Activated CD8-positive, alpha-beta T cell treated with anti-CD3 and anti-CD28 coated beads for 36 hours (primary cell): ENCODE measurements at regions of chr3 and their contacts with region 1.

Region 1: DNA sequence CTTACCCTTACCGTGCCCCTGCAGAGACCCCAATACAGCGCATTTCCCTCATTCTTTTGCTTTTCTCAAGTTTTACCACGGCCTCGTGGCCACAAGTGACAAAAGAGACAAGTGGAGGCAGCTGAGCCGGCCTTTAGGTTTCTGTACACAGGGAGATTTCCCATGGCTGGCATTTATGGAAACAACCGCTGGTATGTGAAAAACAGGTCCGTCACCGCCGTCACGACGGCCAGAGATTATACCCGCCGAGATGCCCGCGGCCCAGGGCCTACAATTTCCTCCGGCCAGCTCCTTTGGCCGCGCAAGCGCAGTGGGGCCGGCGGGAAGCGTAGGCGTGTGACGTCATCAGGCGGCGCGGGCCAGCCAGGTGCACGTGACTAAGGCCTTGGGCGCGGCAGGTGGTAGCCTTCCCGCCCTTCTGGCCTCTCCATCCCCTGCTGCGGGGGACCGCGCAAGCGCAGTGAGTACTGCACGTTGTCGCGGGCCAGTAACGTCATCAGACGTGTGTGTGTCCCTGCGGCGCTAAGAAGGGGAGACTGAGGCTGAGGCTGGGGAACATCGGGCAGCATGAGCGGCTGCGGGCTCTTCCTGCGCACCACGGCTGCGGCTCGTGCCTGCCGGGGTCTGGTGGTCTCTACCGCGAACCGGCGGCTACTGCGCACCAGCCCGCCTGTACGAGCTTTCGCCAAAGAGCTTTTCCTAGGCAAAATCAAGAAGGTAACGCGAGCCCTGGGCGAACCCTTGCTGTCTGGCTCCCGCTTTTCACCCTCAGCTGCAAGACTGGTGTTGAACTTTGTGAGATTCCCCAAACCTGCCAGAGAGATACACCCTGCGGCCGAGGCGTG is at the start of gene ACAD9:
- DNase-seq: peak; percentile 96
- ATAC-seq: peak; percentile 91
- H3K4me3 Mint-ChIP-seq: peak within 1 kb of the TSS; percentile 92
- H3K27ac Mint-ChIP-seq: peak within 1 kb of the TSS; percentile 97
- H3K4me1 Mint-ChIP-seq: peaks cover 52% of the 10 kb centered on the region
- H3K27me3 Mint-ChIP-seq: no peaks in the 10 kb centered on the region
- CTCF ChIP-seq: no peak
- total RNA-seq, gene ACAD9: 50.1 to 50.5 TPM

Region 2: GRCh38 chr3:128617557-128618397 is 261.6 kb before region 1 on chr3:
- CTCF ChIA-PET with region 1: interaction called, 34 read pairs
- POLR2A ChIA-PET with region 1: interaction called, 8 read pairs
- intact Hi-C with region 1: no loop called
- DNase-seq: peak; percentile 99
- ATAC-seq: peak; percentile 90
- H3K4me3 Mint-ChIP-seq: peak overlapping the region; percentile 95
- H3K27ac Mint-ChIP-seq: peak overlapping the region; percentile 94
- H3K4me1 Mint-ChIP-seq: peaks cover 29% of the 10 kb centered on the region
- H3K27me3 Mint-ChIP-seq: no peaks in the 10 kb centered on the region
- CTCF ChIP-seq: peak; percentile 92

Region 3: DNA sequence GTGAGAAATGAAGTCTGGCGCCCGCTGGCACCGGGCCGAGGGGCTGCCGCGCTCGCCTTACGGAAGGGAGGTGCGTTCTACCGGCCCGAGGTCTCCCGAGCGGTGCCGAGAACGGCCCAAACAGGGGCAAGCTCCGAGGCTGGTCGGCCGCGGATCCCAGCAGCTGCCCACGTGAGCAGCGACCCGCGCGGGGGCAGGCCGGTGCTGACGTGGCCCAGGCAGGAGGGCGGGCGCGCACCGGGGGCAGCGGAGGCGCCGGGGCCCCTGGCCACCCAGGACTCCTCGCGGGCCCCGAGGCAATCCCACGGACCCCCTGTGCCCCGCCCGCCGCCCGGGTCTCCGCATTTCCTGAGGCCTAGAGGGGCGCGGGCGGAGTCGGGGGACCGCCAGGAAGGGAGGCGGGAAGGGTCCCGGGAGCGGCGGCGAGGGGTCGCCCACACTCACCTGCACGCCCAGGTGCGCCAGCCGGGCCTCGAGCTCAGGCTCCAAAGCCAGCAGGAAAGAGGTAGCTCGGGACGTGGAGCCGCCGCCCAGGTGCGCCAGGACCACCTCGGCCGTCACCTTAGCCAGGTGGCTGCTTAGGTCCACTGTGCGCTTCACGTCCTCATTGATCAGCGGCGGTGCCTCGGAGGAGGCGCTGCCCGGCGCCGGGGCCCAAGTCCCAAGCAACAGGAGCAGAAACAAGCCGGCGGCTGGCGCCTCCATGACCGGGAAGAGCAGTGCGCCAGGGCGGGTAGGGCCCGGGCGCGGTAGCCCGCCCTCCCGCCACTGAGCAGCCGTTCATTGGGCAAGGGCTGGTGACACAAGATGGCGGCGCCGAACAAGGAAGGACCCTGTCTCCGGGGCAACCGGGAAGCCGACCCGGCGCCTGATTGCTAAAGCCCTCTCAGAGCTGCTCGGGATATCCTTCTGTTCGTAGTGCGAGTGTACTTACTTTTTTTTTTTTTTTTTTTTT is 229.0 kb before region 1 on chr3 and contains the start of gene RPN1:
- CTCF ChIA-PET with region 1: interaction called, 4 read pairs
- POLR2A ChIA-PET with region 1: interaction called, 3 read pairs
- intact Hi-C with region 1: loop called (anchors 2 kb)
- DNase-seq: peak; percentile 97
- ATAC-seq: peak; percentile 97
- H3K4me3 Mint-ChIP-seq: peak within 1 kb of the TSS; percentile 87
- H3K27ac Mint-ChIP-seq: peak within 1 kb of the TSS; percentile 88
- H3K4me1 Mint-ChIP-seq: peaks cover 34% of the 10 kb centered on the region
- H3K27me3 Mint-ChIP-seq: no peaks in the 10 kb centered on the region
- CTCF ChIP-seq: no peak
- total RNA-seq, gene RPN1: 133 TPM

Region 4: DNA sequence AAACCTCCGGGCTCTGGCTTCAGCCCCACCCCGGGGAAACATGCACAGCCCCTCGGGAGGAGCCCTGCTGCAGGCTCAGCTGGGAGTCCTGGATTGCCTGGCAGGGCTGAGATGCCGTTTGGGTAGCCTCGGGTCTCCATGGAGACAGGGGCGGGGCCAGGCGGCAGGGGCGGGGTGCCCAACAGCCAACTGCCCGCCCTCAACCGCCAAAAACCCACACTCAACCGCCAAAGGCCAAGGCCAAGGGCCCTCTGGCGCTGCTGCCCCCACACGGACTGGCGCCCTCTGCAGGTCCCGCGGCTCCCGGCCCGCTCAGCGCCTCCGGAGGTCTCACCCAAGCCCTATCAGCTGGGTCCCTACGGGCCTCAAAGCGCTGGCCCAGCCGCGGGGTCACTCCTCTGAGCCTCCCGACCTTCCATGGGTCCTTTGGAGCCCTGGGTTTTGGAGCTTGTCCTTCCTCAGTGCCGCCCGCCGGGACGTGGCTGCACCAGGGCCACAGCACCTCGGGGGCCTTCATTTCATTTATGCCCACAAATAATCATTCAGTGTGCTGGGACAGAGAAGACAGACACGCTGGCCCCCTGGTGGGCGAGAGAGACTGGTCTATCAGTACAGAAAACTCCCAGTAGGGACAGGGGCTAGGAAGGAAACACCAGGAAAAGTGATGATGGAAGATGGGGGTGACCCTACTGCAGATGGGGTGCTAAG is 33.4 kb before region 1 on chr3:
- CTCF ChIA-PET with region 1: interaction called, 13 read pairs
- POLR2A ChIA-PET with region 1: interaction called, 6 read pairs
- intact Hi-C with region 1: no loop called
- DNase-seq: peak; percentile 94
- ATAC-seq: peak; percentile 91
- H3K4me3 Mint-ChIP-seq: peak overlapping the region; percentile 67
- H3K27ac Mint-ChIP-seq: peak overlapping the region; percentile 94
- H3K4me1 Mint-ChIP-seq: peaks cover 22% of the 10 kb centered on the region
- H3K27me3 Mint-ChIP-seq: no peaks in the 10 kb centered on the region
- CTCF ChIP-seq: peak; percentile 91

Region 5: DNA sequence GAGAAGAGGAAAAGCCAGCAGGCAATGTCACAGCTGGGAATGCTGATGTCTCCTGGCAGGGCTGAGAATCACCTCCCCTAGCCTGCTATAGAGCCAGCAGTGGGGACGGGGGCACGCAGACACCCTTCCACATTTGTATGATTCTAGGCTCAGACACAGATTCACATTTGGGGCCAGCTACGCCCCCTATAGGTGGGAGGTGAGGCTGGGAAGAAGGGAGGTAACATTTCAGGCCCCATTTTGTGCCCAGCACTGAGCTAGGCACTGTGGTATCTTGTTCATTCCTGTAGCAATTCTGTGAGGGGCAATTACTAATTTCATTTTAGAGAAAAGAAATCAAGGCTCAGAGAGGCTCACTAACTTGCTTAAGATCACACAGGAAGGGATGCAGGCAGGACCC is 15.8 kb before region 1 on chr3:
- CTCF ChIA-PET with region 1: interaction called, 8 read pairs
- POLR2A ChIA-PET with region 1: interaction called, 13 read pairs
- intact Hi-C with region 1: no loop called
- DNase-seq: peak; percentile 49
- ATAC-seq: peak; percentile 61
- H3K4me3 Mint-ChIP-seq: no peak overlapping the region
- H3K27ac Mint-ChIP-seq: no peak overlapping the region
- H3K4me1 Mint-ChIP-seq: peaks cover 2% of the 10 kb centered on the region
- H3K27me3 Mint-ChIP-seq: no peaks in the 10 kb centered on the region
- CTCF ChIP-seq: peak; percentile 44

Region 6: DNA sequence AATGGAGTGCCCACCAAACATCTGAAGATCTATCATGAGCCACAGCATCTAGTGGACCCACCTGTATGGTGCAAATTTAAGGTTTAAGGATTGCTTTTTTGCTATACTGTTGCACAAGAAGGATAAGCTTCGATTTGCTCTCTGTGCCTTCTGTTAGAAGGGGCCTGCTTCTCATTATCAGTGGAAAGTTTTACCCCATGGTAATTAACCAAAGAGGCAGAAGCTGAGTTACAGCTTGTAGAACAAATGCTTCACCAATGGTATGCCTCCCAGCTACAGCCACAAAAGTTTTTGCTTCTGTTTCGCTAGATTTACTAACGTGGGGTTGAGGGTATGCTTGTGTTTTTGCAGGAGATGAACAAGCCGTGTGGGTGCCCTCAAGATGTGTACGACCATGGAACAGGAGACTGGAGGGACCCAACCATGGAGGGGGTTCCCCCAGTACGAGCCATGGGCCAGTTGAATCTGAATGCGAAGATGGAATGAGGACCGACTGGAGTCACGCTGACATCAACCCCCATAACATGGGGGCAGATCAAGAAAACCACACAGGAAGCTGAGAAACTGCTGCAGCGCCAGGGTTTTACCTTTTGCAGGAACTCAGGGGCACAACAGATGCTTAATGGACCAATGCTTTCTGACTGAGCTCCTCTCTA is 43.6 kb after region 1 on chr3:
- CTCF ChIA-PET with region 1: interaction called, 23 read pairs
- POLR2A ChIA-PET with region 1: interaction called, 9 read pairs
- intact Hi-C with region 1: no loop called
- DNase-seq: peak; percentile 83
- ATAC-seq: peak; percentile 88
- H3K4me3 Mint-ChIP-seq: peak overlapping the region; percentile 69
- H3K27ac Mint-ChIP-seq: peak overlapping the region; percentile 89
- H3K4me1 Mint-ChIP-seq: peaks cover 37% of the 10 kb centered on the region
- H3K27me3 Mint-ChIP-seq: no peaks in the 10 kb centered on the region
- CTCF ChIP-seq: peak; percentile 6

Region 7: GRCh38 chr3:128950223-128950938 is 71.0 kb after region 1 on chr3:
- CTCF ChIA-PET with region 1: interaction called, 13 read pairs
- POLR2A ChIA-PET with region 1: no interaction called
- intact Hi-C with region 1: no loop called
- DNase-seq: peak; percentile 48
- ATAC-seq: peak; percentile 62
- H3K4me3 Mint-ChIP-seq: no peak overlapping the region
- H3K27ac Mint-ChIP-seq: no peak overlapping the region
- H3K4me1 Mint-ChIP-seq: no peaks in the 10 kb centered on the region
- H3K27me3 Mint-ChIP-seq: no peaks in the 10 kb centered on the region
- CTCF ChIP-seq: no peak

Region 8: GRCh38 chr3:129034648-129035047 is 155.3 kb after region 1 on chr3:
- CTCF ChIA-PET with region 1: no interaction called
- POLR2A ChIA-PET with region 1: no interaction called
- intact Hi-C with region 1: no loop called
- DNase-seq: no peak
- ATAC-seq: peak; percentile 55
- H3K4me3 Mint-ChIP-seq: no peak overlapping the region
- H3K27ac Mint-ChIP-seq: no peak overlapping the region
- H3K4me1 Mint-ChIP-seq: peaks cover 12% of the 10 kb centered on the region
- H3K27me3 Mint-ChIP-seq: no peaks in the 10 kb centered on the region
- CTCF ChIP-seq: no peak

Region 9: GRCh38 chr3:129233538-129233937 is 354.2 kb after region 1 on chr3:
- CTCF ChIA-PET with region 1: no interaction called
- POLR2A ChIA-PET with region 1: no interaction called
- intact Hi-C with region 1: no loop called
- DNase-seq: no peak
- ATAC-seq: no peak
- H3K4me3 Mint-ChIP-seq: no peak overlapping the region
- H3K27ac Mint-ChIP-seq: peak overlapping the region; percentile 25
- H3K4me1 Mint-ChIP-seq: peaks cover 17% of the 10 kb centered on the region
- H3K27me3 Mint-ChIP-seq: peaks cover 3% of the 10 kb centered on the region
- CTCF ChIP-seq: no peak